MCF 10A (cell line): ENCODE measurements at regions of chr12 and their contacts with region 1.

Region 1: GRCh38 chr12:104456417-104456949 is at the start of gene CHST11:
- DNase-seq: peak; percentile 69
- H3K4me3 Mint-ChIP-seq: peak within 1 kb of the TSS; percentile 83
- H3K27ac Mint-ChIP-seq: peak within 1 kb of the TSS; percentile 88
- H3K4me1 Mint-ChIP-seq: peaks cover 24% of the 10 kb centered on the region
- H3K27me3 Mint-ChIP-seq: no peaks in the 10 kb centered on the region
- CTCF ChIP-seq: no peak
- total RNA-seq, gene CHST11: 4.8 and 5.3 TPM in 2 replicates

Region 2: GRCh38 chr12:103431387-103431786 is 1025.1 kb before region 1 on chr12:
- CTCF ChIA-PET with region 1: no interaction called
- POLR2A ChIA-PET with region 1: no interaction called
- intact Hi-C with region 1: no loop called
- DNase-seq: no peak
- H3K4me3 Mint-ChIP-seq: no peak overlapping the region
- H3K27ac Mint-ChIP-seq: no peak overlapping the region
- H3K4me1 Mint-ChIP-seq: no peaks in the 10 kb centered on the region
- H3K27me3 Mint-ChIP-seq: peaks cover 12% of the 10 kb centered on the region
- CTCF ChIP-seq: no peak

Region 3: DNA sequence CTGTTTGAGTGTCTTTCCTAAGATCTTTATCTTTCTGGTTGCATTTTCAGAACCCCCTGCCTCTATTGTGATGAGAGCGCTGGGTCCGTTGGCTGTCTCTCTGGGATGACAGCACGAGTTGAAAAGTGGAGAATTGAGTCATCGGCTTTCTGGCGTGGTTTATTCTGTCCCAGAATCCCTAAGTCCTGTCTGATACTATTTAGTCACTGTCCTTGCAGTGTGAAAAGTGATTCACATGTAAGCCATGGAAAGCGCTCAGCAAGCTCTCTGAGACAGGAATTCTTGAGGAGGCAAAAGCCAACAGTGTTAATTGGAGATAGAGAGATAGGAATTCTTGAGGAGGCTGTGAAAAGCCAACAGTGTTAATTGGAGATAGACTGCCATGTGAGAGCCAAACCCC is 122.0 kb after region 1 on chr12:
- CTCF ChIA-PET with region 1: interaction called, 3 read pairs
- POLR2A ChIA-PET with region 1: no interaction called
- intact Hi-C with region 1: loop called (anchors 5 kb)
- DNase-seq: peak; percentile 64
- H3K4me3 Mint-ChIP-seq: no peak overlapping the region
- H3K27ac Mint-ChIP-seq: no peak overlapping the region
- H3K4me1 Mint-ChIP-seq: peaks cover 8% of the 10 kb centered on the region
- H3K27me3 Mint-ChIP-seq: no peaks in the 10 kb centered on the region
- CTCF ChIP-seq: no peak

Region 4: GRCh38 chr12:104671407-104672098 is 215.1 kb after region 1 on chr12:
- CTCF ChIA-PET with region 1: interaction called, 6 read pairs
- POLR2A ChIA-PET with region 1: interaction called, 5 read pairs
- intact Hi-C with region 1: loop called (anchors 1 kb)
- DNase-seq: peak; percentile 98
- H3K4me3 Mint-ChIP-seq: peak overlapping the region; percentile 30
- H3K27ac Mint-ChIP-seq: peak overlapping the region; percentile 90
- H3K4me1 Mint-ChIP-seq: peaks cover 49% of the 10 kb centered on the region
- H3K27me3 Mint-ChIP-seq: no peaks in the 10 kb centered on the region
- CTCF ChIP-seq: no peak

Region 5: GRCh38 chr12:104790296-104791125 is 334.0 kb after region 1 on chr12:
- CTCF ChIA-PET with region 1: no interaction called
- POLR2A ChIA-PET with region 1: interaction called, 3 read pairs
- intact Hi-C with region 1: loop called (anchors 5 kb)
- DNase-seq: peak; percentile 19
- H3K4me3 Mint-ChIP-seq: no peak overlapping the region
- H3K27ac Mint-ChIP-seq: no peak overlapping the region
- H3K4me1 Mint-ChIP-seq: peaks cover 15% of the 10 kb centered on the region
- H3K27me3 Mint-ChIP-seq: no peaks in the 10 kb centered on the region
- CTCF ChIP-seq: peak; percentile 33

Region 6: DNA sequence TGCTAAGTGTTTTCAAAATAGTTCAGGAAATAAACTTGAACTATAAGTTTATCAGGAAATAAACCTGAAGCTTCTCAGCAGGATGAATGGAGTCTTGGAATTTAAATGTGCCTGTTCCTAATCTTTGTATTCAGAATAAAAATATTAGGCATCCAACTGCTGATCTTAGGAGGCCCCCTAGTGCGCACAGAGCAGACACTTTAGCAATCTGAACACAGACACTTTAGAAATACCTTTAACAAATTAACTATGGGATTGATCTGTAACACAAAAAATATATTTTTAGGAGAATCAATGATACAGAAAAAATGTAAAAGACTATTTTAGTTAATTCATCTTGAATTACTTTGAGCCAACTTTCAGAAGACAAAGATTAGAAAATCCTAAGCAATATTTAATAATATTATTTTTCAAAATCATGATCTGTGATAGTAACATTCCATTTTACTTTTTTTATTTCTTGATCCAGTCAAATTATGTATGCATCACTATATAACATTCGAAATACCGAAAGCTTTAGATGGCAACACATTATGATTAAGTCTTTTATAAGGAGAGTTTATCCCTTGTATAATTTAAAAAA is 420.7 kb after region 1 on chr12:
- CTCF ChIA-PET with region 1: interaction called, 3 read pairs
- POLR2A ChIA-PET with region 1: interaction called, 6 read pairs
- intact Hi-C with region 1: loop called (anchors 2 kb)
- DNase-seq: peak; percentile 40
- H3K4me3 Mint-ChIP-seq: no peak overlapping the region
- H3K27ac Mint-ChIP-seq: no peak overlapping the region
- H3K4me1 Mint-ChIP-seq: no peaks in the 10 kb centered on the region
- H3K27me3 Mint-ChIP-seq: no peaks in the 10 kb centered on the region
- CTCF ChIP-seq: peak; percentile 54

Region 7: GRCh38 chr12:104958009-104958945 is 501.8 kb after region 1 on chr12 and contains the start of gene SLC41A2:
- CTCF ChIA-PET with region 1: interaction called, 3 read pairs
- POLR2A ChIA-PET with region 1: interaction called, 7 read pairs
- intact Hi-C with region 1: loop called (anchors 2 kb)
- DNase-seq: peak; percentile 95
- H3K4me3 Mint-ChIP-seq: peak within 1 kb of the TSS; percentile 91
- H3K27ac Mint-ChIP-seq: peak within 1 kb of the TSS; percentile 85
- H3K4me1 Mint-ChIP-seq: peaks cover 11% of the 10 kb centered on the region
- H3K27me3 Mint-ChIP-seq: no peaks in the 10 kb centered on the region
- CTCF ChIP-seq: peak; percentile 25
- total RNA-seq, gene SLC41A2: 14.6 and 15.9 TPM in 2 replicates

Region 8: GRCh38 chr12:105100998-105101397 is 644.5 kb after region 1 on chr12:
- CTCF ChIA-PET with region 1: no interaction called
- POLR2A ChIA-PET with region 1: no interaction called
- intact Hi-C with region 1: loop called (anchors 5 kb)
- DNase-seq: no peak
- H3K4me3 Mint-ChIP-seq: no peak overlapping the region
- H3K27ac Mint-ChIP-seq: peak overlapping the region; percentile 85
- H3K4me1 Mint-ChIP-seq: peaks cover 12% of the 10 kb centered on the region
- H3K27me3 Mint-ChIP-seq: no peaks in the 10 kb centered on the region
- CTCF ChIP-seq: peak; percentile 24